OCI-LY7 (cell line): ENCODE measurements at regions of chr9 and their contacts with region 1.

Region 1: DNA sequence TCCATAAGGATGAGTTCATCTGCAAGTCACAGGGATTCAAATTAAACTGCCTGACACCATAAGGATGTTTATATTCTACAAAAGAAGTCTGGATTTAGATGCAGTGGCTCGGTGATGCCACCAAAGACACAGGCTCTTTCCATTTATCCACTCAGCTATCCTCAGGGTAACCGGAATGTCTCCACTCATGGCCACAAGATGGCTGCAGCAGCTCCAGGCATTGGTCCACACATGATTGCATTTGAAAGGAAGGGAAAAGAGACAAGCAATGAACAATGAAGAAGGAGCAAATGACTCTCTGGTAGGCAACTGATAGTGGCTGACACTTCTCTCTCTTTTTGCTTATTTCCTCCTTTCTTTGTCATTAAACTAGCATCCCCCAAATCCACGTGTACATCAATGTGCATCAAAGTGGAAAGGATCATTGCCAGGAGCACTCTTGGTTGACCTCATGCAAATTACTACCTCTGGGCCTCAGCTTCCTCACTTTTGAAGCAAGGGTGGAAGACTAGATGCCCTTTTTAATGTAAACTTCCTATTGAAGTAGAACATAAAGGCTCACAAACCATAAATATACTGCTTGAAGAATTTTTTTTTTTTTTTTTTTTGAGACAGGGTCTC is 7.2 kb upstream of the SNX30 start:
- DNase-seq: peak; percentile 85
- H3K4me3 ChIP-seq: peak overlapping the region; percentile 28
- H3K27ac ChIP-seq: peak overlapping the region; percentile 64
- H3K4me1 ChIP-seq: peaks cover 24% of the 10 kb centered on the region
- CTCF ChIP-seq: peak; percentile 65

Region 2: DNA sequence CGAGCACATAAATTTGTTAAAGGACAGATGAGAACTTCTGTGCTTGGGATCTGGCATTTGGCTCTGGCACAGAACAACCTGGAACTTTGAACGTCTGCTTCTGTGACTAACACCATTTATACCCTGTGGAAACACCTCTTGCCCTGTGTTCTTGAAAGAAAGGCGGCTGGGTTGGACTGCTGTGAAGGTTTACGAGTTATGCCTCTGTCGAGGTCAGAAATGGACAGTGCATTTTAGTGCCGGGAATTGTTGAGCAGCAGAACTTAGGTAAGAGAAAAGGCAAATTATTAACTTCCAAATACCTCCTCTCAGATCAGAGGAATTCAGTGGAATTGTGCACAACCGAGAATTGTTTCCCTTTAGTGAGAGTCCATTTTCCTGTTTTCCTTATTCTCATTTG is 11.4 kb before region 1 on chr9:
- CTCF ChIA-PET with region 1: no interaction called
- POLR2A ChIA-PET with region 1: interaction called, 16 read pairs
- intact Hi-C with region 1: no loop called
- DNase-seq: no peak
- H3K4me3 ChIP-seq: no peak overlapping the region
- H3K27ac ChIP-seq: no peak overlapping the region
- H3K4me1 ChIP-seq: no peaks in the 10 kb centered on the region
- CTCF ChIP-seq: no peak